Psoas muscle (tissue), 8 donors: ENCODE measurements at regions of chr20 and their contacts with region 1.

Region 1: DNA sequence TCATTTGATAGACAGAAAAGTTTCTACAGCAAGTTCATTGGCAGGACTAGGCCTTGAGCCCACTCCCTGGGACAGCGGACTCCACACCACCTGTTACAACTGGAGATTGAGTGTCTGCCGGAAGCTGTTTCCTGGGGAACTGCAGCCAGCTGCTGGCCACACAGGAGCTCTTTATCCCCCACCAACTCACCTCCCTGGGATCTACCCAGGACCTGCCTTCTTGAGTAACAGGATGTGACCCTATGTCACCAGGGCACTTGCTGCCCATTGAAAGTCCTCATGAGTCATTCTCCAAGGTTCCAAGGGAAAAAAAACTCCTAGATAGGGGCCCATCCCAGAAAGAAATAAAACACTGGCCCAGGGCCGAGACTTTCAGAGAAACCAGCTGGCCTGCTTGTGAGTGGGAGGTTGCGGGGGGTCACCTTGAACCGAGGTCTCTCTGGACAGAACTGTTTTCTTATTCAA is 37.4 kb upstream of the SLC9A8 start:
- DNase-seq: peak; percentile 77 to 86
- ATAC-seq: peak; percentile 88 to 91 (median 90)
- H3K4me3 ChIP-seq: no peak overlapping the region
- H3K27ac ChIP-seq: peak overlapping the region; percentile 89
- H3K4me1 ChIP-seq: peaks cover 29% of the 10 kb centered on the region
- H3K27me3 ChIP-seq: no peaks in the 10 kb centered on the region
- CTCF ChIP-seq: no peak

Region 2: DNA sequence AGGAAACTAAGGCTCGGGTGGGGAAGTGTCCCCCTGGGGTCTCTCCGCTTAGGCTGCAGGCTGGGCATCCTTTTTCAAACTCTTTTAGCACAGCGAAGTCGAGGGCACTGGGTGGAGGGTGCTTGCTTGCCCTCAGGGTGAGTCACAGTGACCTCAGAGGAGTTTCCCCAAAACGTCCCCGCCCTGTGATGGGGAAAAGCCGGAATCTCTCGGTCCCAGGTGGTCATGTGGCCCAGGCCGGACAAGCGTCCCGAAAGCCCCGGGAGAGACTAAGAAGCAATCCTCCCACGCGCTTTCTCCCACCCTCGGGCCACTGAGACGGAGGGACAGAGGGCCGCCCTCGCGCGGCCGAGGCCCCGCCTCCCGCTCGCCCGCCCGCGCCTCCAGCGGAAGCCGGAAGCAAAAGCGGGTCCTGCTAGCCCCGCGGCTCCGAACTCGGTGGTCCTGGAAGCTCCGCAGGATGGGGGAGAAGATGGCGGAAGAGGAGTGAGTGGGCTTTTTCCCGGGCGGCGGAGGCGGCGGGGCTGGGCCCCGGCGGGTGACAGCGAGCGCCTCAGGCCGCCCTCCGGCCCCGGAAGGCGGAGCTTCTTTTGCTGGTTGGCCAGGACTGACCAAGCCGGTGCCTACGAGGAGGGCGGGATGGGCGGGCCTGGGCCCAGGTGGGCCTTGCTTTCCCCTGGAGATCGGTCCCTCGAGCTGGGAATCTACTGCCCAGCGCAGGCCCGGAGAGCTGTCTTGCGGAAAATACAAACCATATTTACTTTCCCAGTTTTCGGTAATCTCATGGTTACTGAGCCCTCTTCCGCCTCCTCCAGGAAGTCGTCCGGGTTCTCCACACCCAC is 37.4 kb after region 1 on chr20 and contains the start of gene SLC9A8:
- intact Hi-C with region 1: loop called (anchors 5 kb)
- DNase-seq: peak; percentile 90 to 94
- ATAC-seq: peak; percentile 87 to 93 (median 90)
- H3K4me3 ChIP-seq: peak within 1 kb of the TSS; percentile 82
- H3K27ac ChIP-seq: peak within 1 kb of the TSS; percentile 98
- H3K4me1 ChIP-seq: peaks cover 29% of the 10 kb centered on the region
- H3K27me3 ChIP-seq: no peaks in the 10 kb centered on the region
- CTCF ChIP-seq: peak; percentile 45
- total RNA-seq, gene SLC9A8: 8.2 to 19.4 (median 11.2) TPM